Activated CD4-positive, alpha-beta T cell treated with anti-CD3 and anti-CD28 coated beads for 36 hours (primary cell): ENCODE measurements at regions of chr11 and their contacts with region 1.

Region 1: DNA sequence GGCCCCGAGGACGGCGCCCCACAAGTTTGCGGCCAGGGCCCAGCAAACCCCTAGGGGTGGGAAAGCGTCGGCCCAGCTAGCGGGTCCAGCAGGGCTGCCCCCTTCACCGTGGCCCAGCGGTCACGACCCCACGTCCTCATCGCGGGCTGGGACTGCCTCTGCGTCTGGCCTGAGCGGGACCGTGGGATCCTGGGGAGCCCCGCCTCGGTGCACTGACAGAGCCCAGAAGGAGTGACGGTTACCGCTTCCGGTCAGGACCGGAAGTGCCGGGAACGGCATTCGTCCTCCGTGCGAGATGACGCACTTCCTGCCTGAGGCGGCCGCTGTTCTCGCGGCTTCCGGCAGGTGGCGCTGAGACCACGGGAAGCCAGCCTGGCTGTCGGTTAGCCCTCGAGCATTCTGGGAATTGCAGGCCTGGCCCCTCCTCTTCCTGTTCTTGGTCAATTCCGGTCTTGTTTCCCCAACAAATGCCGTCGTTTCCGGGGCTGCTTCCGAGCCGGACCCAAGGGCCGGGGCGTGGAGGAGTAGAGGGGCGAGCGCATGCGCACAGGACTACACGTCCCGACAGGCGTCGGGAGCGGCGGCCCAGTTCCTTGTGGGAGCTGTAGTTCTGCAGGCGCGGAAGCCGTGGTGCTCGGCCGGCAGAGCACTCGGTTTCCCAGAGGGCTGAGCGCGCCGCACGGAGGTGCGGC is at the start of gene TSSC4:
- DNase-seq: peak; percentile 100
- ATAC-seq: peak; percentile 91
- H3K4me3 Mint-ChIP-seq: peak within 1 kb of the TSS; percentile 87
- H3K27ac Mint-ChIP-seq: peak within 1 kb of the TSS; percentile 84
- H3K4me1 Mint-ChIP-seq: peaks cover 16% of the 10 kb centered on the region
- H3K27me3 Mint-ChIP-seq: no peaks in the 10 kb centered on the region
- total RNA-seq, gene TSSC4: 19.8 to 38.4 TPM

Region 2: DNA sequence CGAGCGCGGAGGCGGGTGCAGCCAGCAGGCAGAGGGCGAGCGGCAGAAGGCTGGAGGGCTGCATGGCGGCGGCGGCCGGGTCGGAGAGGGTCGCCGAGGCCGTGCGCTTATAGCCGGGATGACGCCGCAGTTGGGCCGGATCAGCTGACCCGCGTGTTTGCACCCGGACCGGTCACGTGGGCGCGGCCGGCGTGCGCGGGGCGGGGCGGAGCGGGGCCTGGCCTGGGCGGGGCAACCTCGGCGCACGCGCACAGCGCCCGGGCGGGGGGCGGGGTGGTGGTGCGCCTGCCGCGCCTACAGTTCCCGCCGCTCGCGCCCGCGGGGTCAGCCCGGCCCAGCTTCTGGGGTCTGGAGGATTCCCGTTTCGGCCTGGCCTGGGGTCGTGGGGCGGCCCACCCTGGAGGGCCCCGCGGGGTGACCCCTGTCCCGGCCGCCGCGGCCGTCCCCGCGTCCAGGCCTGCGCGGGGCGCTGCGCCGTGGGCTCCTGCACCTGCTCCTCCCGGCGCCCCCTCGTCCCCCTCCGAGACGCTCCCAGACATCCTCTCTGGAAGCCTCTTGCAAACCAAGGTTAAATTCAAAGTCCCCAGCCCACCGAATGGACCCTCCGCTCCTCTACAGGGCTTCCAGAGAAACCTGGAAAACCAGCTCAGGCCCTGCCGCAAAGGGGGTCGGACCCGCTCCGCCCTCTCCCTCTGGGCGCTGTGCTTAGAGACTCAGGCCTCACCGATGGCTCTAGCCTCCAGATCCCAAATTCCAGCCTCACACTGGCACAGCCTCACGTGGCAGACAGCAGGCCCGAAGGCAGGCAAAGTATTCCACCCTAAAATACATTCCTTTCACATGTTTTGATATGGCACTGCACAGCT is 636.2 kb before region 1 on chr11 and contains the start of gene CTSD:
- CTCF ChIA-PET with region 1: no interaction called
- POLR2A ChIA-PET with region 1: no interaction called
- intact Hi-C with region 1: loop called in 1 of 2 experiments (anchors 5 kb)
- DNase-seq: peak; percentile 94
- ATAC-seq: peak; percentile 91
- H3K4me3 Mint-ChIP-seq: peak within 1 kb of the TSS; percentile 83
- H3K27ac Mint-ChIP-seq: peak within 1 kb of the TSS; percentile 58
- H3K4me1 Mint-ChIP-seq: peaks cover 35% of the 10 kb centered on the region
- H3K27me3 Mint-ChIP-seq: no peaks in the 10 kb centered on the region
- total RNA-seq, gene CTSD: 38.8 to 41.5 TPM

Region 3: DNA sequence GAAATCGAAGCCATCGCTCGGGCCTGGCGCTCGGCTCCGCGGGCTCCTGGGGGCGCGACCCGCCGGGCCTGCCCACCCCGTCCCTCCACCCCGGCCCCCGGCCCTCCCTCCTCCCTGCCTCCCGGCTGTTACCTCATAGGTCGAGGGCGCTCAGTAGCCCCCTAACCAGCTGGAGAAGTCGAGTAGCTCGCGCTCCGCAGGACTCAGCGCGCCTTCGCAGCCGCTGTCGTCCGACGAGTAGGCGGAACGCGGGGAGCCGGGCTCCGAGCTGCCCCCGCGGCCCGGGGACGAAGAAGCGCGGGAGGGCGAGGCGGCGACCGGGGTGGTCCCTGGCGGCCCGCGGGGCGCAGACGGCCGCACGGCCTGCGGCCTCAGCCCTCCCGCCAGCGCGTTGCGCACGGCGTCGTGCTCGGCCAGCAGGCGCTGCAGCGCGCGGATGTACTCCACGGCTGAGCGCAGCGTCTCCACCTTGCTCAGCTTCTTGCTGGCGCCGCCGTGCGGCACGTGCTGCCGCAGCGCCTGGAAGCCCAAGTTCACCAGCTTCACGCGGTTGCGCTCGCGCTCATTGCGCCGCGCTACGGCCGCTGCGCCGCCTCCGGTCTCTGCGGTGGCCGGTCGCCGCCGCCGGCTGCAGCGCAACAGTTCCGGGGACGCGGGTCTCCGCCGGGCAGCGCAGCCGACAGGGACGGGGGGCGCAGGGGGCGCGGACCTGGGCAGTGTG is 130.5 kb before region 1 on chr11:
- CTCF ChIA-PET with region 1: no interaction called
- POLR2A ChIA-PET with region 1: no interaction called
- intact Hi-C with region 1: loop called in 1 of 2 experiments (anchors 1 kb)
- DNase-seq: peak; percentile 73
- ATAC-seq: peak; percentile 20
- H3K4me3 Mint-ChIP-seq: peak overlapping the region; percentile 52
- H3K27ac Mint-ChIP-seq: no peak overlapping the region
- H3K4me1 Mint-ChIP-seq: peaks cover 22% of the 10 kb centered on the region
- H3K27me3 Mint-ChIP-seq: peaks cover 29% of the 10 kb centered on the region

Region 4: DNA sequence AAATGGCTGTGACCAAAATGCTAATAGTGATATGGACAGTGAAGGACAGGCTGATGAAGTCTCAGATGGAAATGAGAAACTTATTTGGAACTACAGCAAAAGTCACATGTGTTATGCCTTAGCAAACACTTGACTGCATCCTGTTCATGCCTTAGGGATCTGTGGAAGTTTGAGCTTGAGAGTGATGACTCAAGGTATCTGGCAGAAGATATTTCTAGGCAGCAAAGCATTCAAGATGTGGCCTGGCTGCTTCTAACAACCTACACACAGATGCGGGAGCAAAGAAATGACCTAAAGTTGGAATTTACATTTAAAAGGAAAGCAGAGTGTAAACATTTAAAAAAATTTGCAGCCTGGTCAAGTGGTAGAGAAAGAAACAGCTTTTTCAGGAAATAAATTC is 51.2 kb before region 1 on chr11:
- CTCF ChIA-PET with region 1: no interaction called
- POLR2A ChIA-PET with region 1: no interaction called
- intact Hi-C with region 1: no loop called
- DNase-seq: no peak
- ATAC-seq: no peak
- H3K4me3 Mint-ChIP-seq: no peak overlapping the region
- H3K27ac Mint-ChIP-seq: no peak overlapping the region
- H3K4me1 Mint-ChIP-seq: no peaks in the 10 kb centered on the region
- H3K27me3 Mint-ChIP-seq: no peaks in the 10 kb centered on the region

Region 5: GRCh38 chr11:2420502-2421225 is 20.4 kb after region 1 on chr11:
- CTCF ChIA-PET with region 1: interaction called, 14 read pairs
- POLR2A ChIA-PET with region 1: no interaction called
- intact Hi-C with region 1: loop called in 1 of 2 experiments (anchors 1 kb)
- DNase-seq: peak; percentile 85
- ATAC-seq: peak; percentile 96
- H3K4me3 Mint-ChIP-seq: no peak overlapping the region
- H3K27ac Mint-ChIP-seq: no peak overlapping the region
- H3K4me1 Mint-ChIP-seq: no peaks in the 10 kb centered on the region
- H3K27me3 Mint-ChIP-seq: no peaks in the 10 kb centered on the region

Region 6: DNA sequence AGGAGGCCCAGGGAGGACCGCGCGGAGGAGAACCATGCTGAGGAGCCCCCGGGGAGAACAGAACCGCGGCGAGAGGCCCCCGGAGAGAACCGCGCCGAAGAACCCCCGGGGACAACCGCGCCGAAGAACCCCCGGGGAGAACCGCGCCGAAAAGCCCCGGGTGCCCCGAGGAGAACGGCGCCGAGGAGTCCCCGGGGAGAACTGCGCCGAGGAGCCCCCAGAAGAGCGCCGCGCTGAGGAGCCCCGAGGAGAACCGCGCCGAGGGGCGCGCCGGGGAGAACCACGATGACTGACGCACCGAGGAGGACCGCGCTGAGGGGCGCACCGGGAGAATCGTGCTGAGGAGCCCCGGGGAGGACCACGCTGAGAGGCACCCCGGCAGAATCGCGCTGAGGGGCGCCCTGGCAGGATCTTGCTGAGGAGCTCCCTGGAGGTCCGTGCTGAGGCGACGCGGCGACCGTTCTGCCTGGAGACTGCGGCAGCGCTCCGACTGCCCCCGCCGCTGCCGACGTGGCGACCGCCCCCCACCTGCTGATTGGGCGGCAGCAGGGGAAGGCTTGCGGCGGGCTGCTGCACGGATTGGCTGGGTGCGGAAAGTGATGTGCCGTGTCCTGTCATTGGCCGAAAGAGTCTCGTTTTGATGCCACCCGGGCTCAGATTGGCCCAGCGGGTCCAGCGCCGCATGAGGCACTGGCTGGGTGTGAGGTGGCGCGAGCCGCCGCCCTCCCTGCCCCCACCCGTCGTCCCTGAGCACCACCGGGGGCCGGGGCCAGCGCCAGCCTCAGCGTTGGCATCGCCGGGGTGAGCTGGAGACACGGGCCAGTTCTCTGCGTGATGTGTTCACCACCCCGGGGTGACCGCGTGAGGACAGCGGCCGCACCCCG is 299.6 kb after region 1 on chr11 and contains the start of gene KCNQ1OT1:
- CTCF ChIA-PET with region 1: no interaction called
- POLR2A ChIA-PET with region 1: no interaction called
- intact Hi-C with region 1: loop called in 1 of 2 experiments (anchors 1 kb)
- DNase-seq: peak; percentile 91
- ATAC-seq: peak; percentile 98
- H3K4me3 Mint-ChIP-seq: peak within 1 kb of the TSS; percentile 79
- H3K27ac Mint-ChIP-seq: peak within 1 kb of the TSS; percentile 28
- H3K4me1 Mint-ChIP-seq: peaks cover 8% of the 10 kb centered on the region
- H3K27me3 Mint-ChIP-seq: no peaks in the 10 kb centered on the region
- total RNA-seq, gene KCNQ1OT1: 0.16 TPM

Region 7: DNA sequence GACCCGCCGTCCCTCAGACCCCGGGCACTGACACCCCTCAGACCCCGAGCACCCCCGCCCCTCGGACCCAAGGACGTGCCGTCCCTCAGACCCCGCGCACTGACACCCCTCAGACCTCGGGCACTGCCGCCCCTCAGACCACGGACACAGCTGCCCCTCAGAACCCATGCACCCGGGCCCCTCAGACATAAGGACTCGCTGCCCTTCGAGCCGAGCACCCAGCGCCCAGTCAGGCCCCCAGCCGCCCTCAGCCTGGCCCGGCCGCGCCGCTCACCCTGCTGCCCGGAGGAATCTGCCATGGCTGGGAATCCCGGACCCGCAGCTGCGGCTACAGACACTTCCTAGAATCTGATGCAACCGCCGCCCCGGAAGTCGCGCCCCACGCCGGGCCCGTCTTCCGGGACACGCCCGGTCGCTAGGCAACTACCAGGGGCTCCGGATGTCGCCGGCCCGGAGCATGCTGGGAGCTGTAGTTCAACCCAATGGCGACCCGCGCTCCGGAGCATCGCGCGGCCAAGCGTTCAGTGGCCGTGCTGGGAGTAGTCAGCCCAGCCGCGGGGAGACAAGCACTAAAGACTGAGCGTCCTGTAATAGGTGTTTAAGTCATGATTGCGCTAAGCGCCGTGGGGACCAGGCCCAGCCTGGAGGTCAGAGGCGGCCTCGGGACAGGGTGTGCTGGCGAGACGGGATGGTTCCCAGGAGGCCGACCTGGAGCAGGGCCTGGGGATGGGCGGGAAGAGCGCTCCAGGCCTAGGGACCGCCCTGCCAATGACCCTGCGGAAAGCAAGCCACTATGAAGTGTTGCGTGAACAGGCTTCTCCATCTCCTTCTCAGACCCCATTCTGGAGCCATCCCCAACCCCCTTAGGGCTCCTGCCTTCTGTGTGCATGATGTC is 657.1 kb after region 1 on chr11 and contains the start of gene CARS1:
- CTCF ChIA-PET with region 1: no interaction called
- POLR2A ChIA-PET with region 1: no interaction called
- intact Hi-C with region 1: loop called in 1 of 2 experiments (anchors 2 kb)
- DNase-seq: peak; percentile 98
- ATAC-seq: peak; percentile 99
- H3K4me3 Mint-ChIP-seq: peak within 1 kb of the TSS; percentile 89
- H3K27ac Mint-ChIP-seq: peak within 1 kb of the TSS; percentile 87
- H3K4me1 Mint-ChIP-seq: peaks cover 29% of the 10 kb centered on the region
- H3K27me3 Mint-ChIP-seq: no peaks in the 10 kb centered on the region
- total RNA-seq, gene CARS1: 94.1 to 126 TPM